Thyroid gland (tissue), 4 donors: ENCODE measurements at regions of chr2 and their contacts with region 1.

Region 1: GRCh38 chr2:241702132-241703031 is 543 bp downstream of the ING5 start:
- DNase-seq: peak; percentile 89 to 95
- H3K4me3 ChIP-seq: peak overlapping the region; percentile 43 to 93 (median 90)
- H3K27ac ChIP-seq: peak overlapping the region in 1 of 3 donors; percentile 69
- H3K4me1 ChIP-seq: peaks cover 16 to 17% of the 10 kb centered on the region in 2 donors
- H3K27me3 ChIP-seq: no peaks in the 10 kb centered on the region
- CTCF ChIP-seq: peak in 5 of 6 experiments; percentile 45 to 58 (median 51)
- POLR2A ChIP-seq: peak in 1 of 2 donors; percentile 32

Region 2: GRCh38 chr2:241734467-241735208 is 32.3 kb after region 1 on chr2 and contains the start of gene D2HGDH:
- intact Hi-C with region 1: loop called (anchors 2 kb)
- DNase-seq: peak; percentile 92 to 95
- H3K4me3 ChIP-seq: peak within 1 kb of the TSS; percentile 87 to 94 (median 92)
- H3K27ac ChIP-seq: peak within 1 kb of the TSS; percentile 70 to 87 (median 71)
- H3K4me1 ChIP-seq: peaks cover 12 to 24% of the 10 kb centered on the region in 2 donors
- H3K27me3 ChIP-seq: no peaks in the 10 kb centered on the region
- CTCF ChIP-seq: no peak
- POLR2A ChIP-seq: peak; percentile 79 to 83
- total RNA-seq, gene D2HGDH: 20.2 to 34.4 (median 23.0) TPM